Activated T-helper 1 cell treated with anti-CD3 and anti-CD28 coated beads, Interleukin-12 subunit alpha, Interleukin-12 subunit beta, Interleukin-2, Interleukin-4 antibody, amounts not matched to agents 30 ng/mL and 10 ng/mL and 1 ng/mL, durations not matched to agents 14 hours and 24 hours and 36 hours (primary cell): ENCODE measurements at regions of chr1 and their contacts with region 1.

Region 1: GRCh38 chr1:147618077-147618569 is 52.2 kb downstream of the ACP6 start:
- DNase-seq: peak; percentile 55
- H3K4me3 Mint-ChIP-seq: peak overlapping the region; percentile 15
- H3K27ac Mint-ChIP-seq: peak overlapping the region; percentile 74
- H3K4me1 Mint-ChIP-seq: peaks cover 40% of the 10 kb centered on the region
- H3K27me3 Mint-ChIP-seq: no peaks in the 10 kb centered on the region

Region 2: DNA sequence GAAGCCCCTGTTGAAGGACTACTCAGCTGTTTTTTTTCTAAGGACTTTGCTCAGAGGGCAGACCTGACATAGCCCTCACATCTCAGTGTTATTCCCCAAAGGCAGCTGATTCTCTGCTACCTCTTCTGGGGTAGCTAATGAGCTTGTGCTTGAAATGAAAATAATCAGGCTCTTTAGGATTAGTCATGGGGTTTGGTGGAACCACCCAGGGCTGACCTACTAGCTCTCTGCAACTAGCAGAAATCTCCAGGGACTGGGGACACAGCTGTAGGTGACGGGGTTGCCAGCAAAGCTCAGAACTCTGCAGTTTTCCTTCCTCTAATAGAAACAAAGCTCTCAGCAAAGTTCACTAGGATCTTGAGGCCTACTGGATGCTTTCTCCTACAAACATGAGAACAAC is 183.2 kb before region 1 on chr1:
- intact Hi-C with region 1: no loop called
- DNase-seq: no peak
- H3K4me3 Mint-ChIP-seq: no peak overlapping the region
- H3K27ac Mint-ChIP-seq: no peak overlapping the region
- H3K4me1 Mint-ChIP-seq: no peaks in the 10 kb centered on the region
- H3K27me3 Mint-ChIP-seq: peaks cover 2% of the 10 kb centered on the region

Region 3: GRCh38 chr1:147515046-147515869 is 102.9 kb before region 1 on chr1:
- intact Hi-C with region 1: loop called (anchors 1 kb)
- DNase-seq: no peak
- H3K4me3 Mint-ChIP-seq: no peak overlapping the region
- H3K27ac Mint-ChIP-seq: no peak overlapping the region
- H3K4me1 Mint-ChIP-seq: peaks cover 7% of the 10 kb centered on the region
- H3K27me3 Mint-ChIP-seq: peaks cover 11% of the 10 kb centered on the region

Region 4: DNA sequence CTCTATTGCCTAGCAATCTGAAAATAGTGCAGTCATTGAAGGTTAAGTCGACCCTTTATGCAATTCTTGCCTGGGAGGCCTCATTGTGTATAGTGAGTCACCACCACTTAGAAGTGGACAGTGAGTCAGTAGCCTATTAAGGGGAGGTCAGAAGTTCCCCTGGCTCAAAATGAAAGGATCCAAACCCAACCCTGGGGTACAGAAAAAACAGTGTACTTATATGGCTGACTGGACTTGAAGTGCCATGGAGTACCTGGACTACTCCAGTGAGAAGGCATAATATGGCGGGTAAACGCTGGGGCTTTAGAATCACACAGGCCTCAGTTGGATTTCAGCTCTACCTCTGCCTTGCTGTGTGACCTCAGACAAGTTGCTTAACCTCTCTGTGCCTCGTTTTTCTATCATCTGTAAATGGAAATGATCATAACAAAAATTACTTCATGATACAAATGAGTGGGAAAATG is 79.0 kb before region 1 on chr1:
- intact Hi-C with region 1: loop called (anchors 1 kb)
- DNase-seq: no peak
- H3K4me3 Mint-ChIP-seq: no peak overlapping the region
- H3K27ac Mint-ChIP-seq: no peak overlapping the region
- H3K4me1 Mint-ChIP-seq: peaks cover 12% of the 10 kb centered on the region
- H3K27me3 Mint-ChIP-seq: peaks cover 13% of the 10 kb centered on the region

Region 5: DNA sequence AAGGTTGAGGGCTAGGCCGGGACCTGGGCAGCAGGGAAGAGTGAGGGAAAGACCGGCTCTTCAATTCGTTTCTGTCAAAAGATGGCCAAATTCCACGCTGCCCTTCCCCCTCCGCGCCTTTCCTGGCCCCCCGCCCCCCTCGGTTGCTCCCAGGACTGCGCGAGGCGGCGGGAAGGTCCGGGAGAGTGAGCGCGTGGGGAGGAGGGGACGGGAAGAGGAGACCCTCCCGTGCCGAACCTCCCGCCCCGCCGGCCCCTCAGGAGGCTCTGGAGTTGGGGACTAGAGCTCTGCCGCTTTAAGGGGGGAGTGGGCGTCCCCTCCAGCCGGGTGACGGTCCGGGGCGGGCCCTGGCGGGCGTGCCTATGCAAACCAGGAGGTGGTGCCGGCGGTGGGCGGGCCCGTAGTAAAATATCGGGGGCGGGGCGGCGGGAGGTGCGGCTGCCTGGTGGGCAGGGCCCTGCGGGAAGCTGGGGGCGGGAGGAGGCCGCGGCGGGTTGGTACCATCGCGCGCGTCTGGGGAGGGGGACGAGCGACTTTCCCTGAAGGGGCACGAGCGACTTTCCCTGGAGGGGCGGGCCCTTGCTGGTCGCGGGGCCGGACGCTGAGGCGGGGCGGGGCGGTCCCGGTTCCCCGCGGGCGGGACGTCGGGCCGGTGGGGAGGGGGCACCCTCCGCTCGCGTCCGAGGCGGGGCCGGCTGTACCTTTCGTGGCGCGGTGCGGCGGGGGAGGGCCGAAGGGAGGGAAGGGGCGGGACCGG is 18.6 kb before region 1 on chr1:
- intact Hi-C with region 1: loop called (anchors 1 kb)
- DNase-seq: peak; percentile 89
- H3K4me3 Mint-ChIP-seq: peak overlapping the region; percentile 87
- H3K27ac Mint-ChIP-seq: peak overlapping the region; percentile 79
- H3K4me1 Mint-ChIP-seq: peaks cover 34% of the 10 kb centered on the region
- H3K27me3 Mint-ChIP-seq: peaks cover 20% of the 10 kb centered on the region

Region 6: GRCh38 chr1:147670317-147671041 is 52.4 kb after region 1 on chr1 and contains the start of gene ACP6:
- intact Hi-C with region 1: loop called (anchors 1 kb)
- DNase-seq: peak; percentile 86
- H3K4me3 Mint-ChIP-seq: peak within 1 kb of the TSS; percentile 92
- H3K27ac Mint-ChIP-seq: peak within 1 kb of the TSS; percentile 88
- H3K4me1 Mint-ChIP-seq: peaks cover 24% of the 10 kb centered on the region
- H3K27me3 Mint-ChIP-seq: peaks cover 24% of the 10 kb centered on the region
- total RNA-seq, gene ACP6: 14.1 and 14.7 TPM in 2 replicates